Naive thymus-derived CD4-positive, alpha-beta T cell (primary cell): ENCODE measurements at regions of chr1 and their contacts with region 1.

Region 1: GRCh38 chr1:182149411-182149965 is 88.0 kb upstream of the ZNF648 start:
- DNase-seq: peak in 6 of 9 donors; percentile 6 to 31 (median 17)
- ATAC-seq: peak; percentile 85
- H3K4me3 ChIP-seq: no peak overlapping the region
- H3K4me3 Mint-ChIP-seq: peak overlapping the region in 1 of 10 donors; percentile 33
- H3K27ac ChIP-seq: no peak overlapping the region
- H3K27ac Mint-ChIP-seq: peak overlapping the region in 4 of 9 donors; percentile 41 to 85 (median 51)
- H3K4me1 ChIP-seq: no peaks in the 10 kb centered on the region
- H3K4me1 Mint-ChIP-seq: peaks cover 4 to 53% (median 8%) of the 10 kb centered on the region in 7 donors
- H3K27me3 ChIP-seq: no peaks in the 10 kb centered on the region
- H3K27me3 Mint-ChIP-seq: no peaks in the 10 kb centered on the region

Region 2: DNA sequence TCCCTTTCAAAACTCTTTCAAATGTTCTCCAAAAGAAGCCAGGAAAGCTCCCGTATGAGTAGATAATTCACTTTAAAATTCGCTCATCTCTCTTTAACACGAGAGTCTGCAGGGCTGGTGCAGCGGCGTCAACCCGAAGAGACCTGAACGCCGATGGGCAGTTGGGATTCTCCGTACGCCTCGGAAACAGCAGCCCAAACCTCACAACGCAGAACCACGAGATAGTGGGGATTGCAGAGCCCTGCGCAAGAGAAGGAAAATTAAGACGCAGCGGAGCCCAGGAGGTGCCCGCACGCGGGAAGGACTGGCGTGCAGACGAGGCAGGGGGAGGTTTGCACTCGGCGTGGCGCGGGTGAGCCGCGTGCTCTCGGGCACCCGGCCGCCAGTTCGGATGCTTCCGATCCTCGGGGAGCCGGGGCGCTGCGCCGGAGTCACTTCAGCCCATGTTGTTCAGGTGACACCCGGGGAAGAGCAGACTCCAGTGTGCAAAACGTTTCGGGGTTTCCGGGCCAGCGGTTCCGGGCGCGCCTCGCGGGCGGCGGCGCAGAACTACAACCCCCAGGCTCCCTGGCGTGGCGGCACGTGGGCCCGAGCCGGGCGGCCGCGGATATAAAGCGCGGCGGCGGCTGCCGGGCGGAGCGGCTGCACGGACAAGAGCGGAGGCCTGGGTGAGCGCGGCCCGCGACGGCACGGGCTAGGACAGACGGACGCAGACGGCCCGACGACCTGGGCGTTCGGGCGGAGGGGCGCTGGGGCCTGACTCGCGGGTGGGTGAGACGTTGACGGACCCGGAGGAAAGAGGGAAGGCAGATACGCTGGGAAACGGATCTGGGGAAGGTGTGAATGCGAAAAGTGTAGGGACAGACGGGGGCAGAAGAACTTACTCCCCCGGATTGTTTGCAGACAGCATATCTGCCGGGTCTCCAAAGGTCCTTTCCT is 639.9 kb after region 1 on chr1 and contains the start of gene NPL:
- CTCF ChIA-PET with region 1: no interaction called
- POLR2A ChIA-PET with region 1: no interaction called
- intact Hi-C with region 1: loop called (anchors 5 kb)
- DNase-seq: peak; percentile 78 to 88 (median 86)
- ATAC-seq: peak; percentile 97
- H3K4me3 ChIP-seq: peak within 1 kb of the TSS; percentile 94
- H3K4me3 Mint-ChIP-seq: peak within 1 kb of the TSS; percentile 88 to 96 (median 94)
- H3K27ac ChIP-seq: peak within 1 kb of the TSS; percentile 68
- H3K27ac Mint-ChIP-seq: peak within 1 kb of the TSS; percentile 45 to 94 (median 87)
- H3K4me1 ChIP-seq: peaks cover 8 to 13% of the 10 kb centered on the region in 2 donors
- H3K4me1 Mint-ChIP-seq: peaks cover 8 to 18% (median 15%) of the 10 kb centered on the region in 7 donors
- H3K27me3 ChIP-seq: no peaks in the 10 kb centered on the region
- H3K27me3 Mint-ChIP-seq: peaks cover 0 to 38% (median 0%) of the 10 kb centered on the region in 5 donors
- total RNA-seq, gene NPL: 3.0 to 20.8 (median 9.9) TPM